ENCODE measurements at regions of chr9 and their contacts with region 1.

Region 1: GRCh38 chr9:94603259-94604160 is 9.9 kb upstream of the FBP2 start:
- DNase-seq: peak; percentile 19 to 70 (median 60)
- ATAC-seq: peak; percentile 89
- H3K4me3 ChIP-seq: no peak overlapping the region
- H3K4me3 Mint-ChIP-seq: no peak overlapping the region
- H3K27ac ChIP-seq: no peak overlapping the region
- H3K27ac Mint-ChIP-seq: peak overlapping the region in 1 of 9 donors; percentile 41
- H3K4me1 ChIP-seq: no peaks in the 10 kb centered on the region
- H3K4me1 Mint-ChIP-seq: peaks cover 3 to 7% (median 6%) of the 10 kb centered on the region in 7 donors
- H3K27me3 ChIP-seq: peaks cover 0 to 3% of the 10 kb centered on the region in 2 donors
- H3K27me3 Mint-ChIP-seq: peaks cover 0 to 18% (median 0%) of the 10 kb centered on the region in 5 donors

Region 2: DNA sequence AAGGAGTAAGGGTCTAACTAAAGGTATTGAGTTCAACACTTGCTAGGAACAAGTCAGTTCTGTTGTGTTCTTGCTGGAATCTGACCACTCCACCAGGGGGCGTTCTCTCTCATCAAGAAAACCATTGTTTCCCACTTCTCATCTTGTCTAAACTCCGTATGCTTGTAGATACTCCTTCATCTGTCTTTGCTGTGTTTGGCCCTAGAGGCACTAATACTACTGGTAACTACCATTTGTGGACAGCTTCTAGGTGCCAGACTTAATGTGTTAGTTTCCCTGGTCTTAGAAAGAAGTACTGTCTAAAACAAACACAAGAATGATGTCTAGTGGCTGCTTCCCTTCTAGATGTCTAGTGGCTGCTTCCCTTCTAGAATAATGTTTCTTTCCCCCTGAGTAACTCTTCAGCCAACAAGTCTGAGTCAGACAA is 538.0 kb before region 1 on chr9:
- CTCF ChIA-PET with region 1: no interaction called
- POLR2A ChIA-PET with region 1: no interaction called
- intact Hi-C with region 1: loop called in 1 of 2 experiments (anchors 1 kb)
- DNase-seq: peak; percentile 40 to 75 (median 66)
- ATAC-seq: peak; percentile 79
- H3K4me3 ChIP-seq: no peak overlapping the region
- H3K4me3 Mint-ChIP-seq: no peak overlapping the region
- H3K27ac ChIP-seq: no peak overlapping the region
- H3K27ac Mint-ChIP-seq: no peak overlapping the region
- H3K4me1 ChIP-seq: peaks cover 0 to 3% of the 10 kb centered on the region in 2 donors
- H3K4me1 Mint-ChIP-seq: peaks cover 0 to 8% (median 5%) of the 10 kb centered on the region in 7 donors
- H3K27me3 ChIP-seq: no peaks in the 10 kb centered on the region
- H3K27me3 Mint-ChIP-seq: no peaks in the 10 kb centered on the region

Region 3: GRCh38 chr9:94166237-94166963 is 437.1 kb before region 1 on chr9:
- CTCF ChIA-PET with region 1: no interaction called
- POLR2A ChIA-PET with region 1: no interaction called
- intact Hi-C with region 1: no loop called
- DNase-seq: peak; percentile 81 to 96 (median 92)
- ATAC-seq: peak; percentile 72
- H3K4me3 ChIP-seq: peak overlapping the region; percentile 82
- H3K4me3 Mint-ChIP-seq: peak overlapping the region; percentile 84 to 96 (median 88)
- H3K27ac ChIP-seq: peak overlapping the region; percentile 100
- H3K27ac Mint-ChIP-seq: peak overlapping the region; percentile 79 to 97 (median 91)
- H3K4me1 ChIP-seq: peaks cover 37 to 38% of the 10 kb centered on the region in 2 donors
- H3K4me1 Mint-ChIP-seq: peaks cover 33 to 61% (median 58%) of the 10 kb centered on the region in 7 donors
- H3K27me3 ChIP-seq: no peaks in the 10 kb centered on the region
- H3K27me3 Mint-ChIP-seq: no peaks in the 10 kb centered on the region

Region 4: DNA sequence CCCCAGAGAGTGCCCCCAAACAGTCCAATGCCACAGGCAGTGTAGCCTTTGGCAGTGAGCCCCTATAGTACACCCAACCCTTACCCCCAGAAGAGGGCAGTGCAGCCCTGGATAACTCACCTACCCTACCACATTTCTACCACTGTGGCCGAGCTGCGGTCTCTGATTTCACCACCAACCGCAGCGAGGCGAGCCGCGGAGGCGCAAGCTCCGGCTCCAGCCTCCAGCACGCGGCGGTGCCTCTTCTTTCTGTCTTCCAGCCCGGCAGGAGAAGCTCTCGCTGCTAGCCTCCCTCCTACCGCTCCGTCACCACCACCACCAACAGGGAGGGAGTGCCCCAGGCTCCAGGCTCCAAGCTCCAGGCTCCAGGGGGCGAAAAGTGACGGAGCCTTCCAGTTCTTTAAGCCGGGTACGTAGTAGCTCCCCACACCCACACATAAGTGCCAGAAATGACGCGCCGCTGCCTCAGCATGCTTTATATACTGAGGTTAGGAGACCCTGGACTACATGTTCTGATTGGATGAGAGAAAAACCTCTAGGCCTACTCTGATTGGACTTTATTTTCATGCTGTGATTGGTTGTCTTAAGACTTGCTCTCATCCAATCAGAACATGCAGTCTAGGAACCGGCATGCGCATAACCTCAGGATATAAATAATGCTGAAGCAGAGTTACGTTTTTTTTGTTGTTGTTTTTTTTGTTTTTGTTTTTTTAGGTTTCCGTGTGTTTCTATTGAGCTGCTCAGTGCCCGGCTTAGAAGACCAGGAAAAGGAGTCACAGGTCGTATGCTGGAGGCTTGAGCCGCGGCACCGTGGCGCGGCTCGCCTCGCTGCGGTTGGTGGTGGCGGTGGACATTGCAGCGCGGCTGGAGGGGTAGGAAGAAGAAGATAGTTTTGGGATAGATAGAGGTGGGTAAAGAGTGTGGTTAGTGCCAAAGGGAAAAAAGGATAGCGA is 48.8 kb before region 1 on chr9 and contains the start of gene PCAT7:
- CTCF ChIA-PET with region 1: no interaction called
- POLR2A ChIA-PET with region 1: no interaction called
- intact Hi-C with region 1: loop called in 1 of 2 experiments (anchors 5 kb)
- DNase-seq: peak in 3 of 9 donors; percentile 3 to 15 (median 7)
- ATAC-seq: peak; percentile 65
- H3K4me3 ChIP-seq: no peak within 1 kb of the TSS
- H3K4me3 Mint-ChIP-seq: no peak within 1 kb of the TSS
- H3K27ac ChIP-seq: no peak within 1 kb of the TSS
- H3K27ac Mint-ChIP-seq: no peak within 1 kb of the TSS
- H3K4me1 ChIP-seq: no peaks in the 10 kb centered on the region
- H3K4me1 Mint-ChIP-seq: no peaks in the 10 kb centered on the region
- H3K27me3 ChIP-seq: no peaks in the 10 kb centered on the region
- H3K27me3 Mint-ChIP-seq: peaks cover 0 to 29% (median 0%) of the 10 kb centered on the region in 5 donors
- total RNA-seq, gene PCAT7: 0.27 TPM in 1 of 5 experiments, not detected in the others